OCI-LY7 (cell line): ENCODE measurements at regions of chr14 and their contacts with region 1.

Region 1: DNA sequence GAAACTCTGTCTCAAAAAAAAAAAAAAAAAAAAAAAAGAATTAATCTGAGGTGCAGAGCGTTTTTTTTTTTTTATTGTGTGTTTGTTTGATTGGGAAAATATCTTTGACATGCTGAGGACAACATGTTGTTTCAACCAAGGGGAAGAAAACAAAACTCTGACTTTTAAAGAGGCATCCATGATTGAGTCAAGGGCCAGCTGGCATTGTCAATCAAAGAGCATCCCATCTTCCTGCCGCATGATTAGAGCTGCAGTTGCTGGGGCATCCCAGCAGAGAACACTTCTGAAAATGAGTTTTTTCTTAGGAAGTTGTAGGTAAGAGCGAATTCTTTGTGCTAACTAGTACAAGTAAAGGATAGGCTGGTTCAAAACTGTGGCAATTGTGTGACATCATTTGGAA is 200.9 kb upstream of the DAAM1 start:
- DNase-seq: no peak
- H3K4me3 ChIP-seq: no peak overlapping the region
- H3K27ac ChIP-seq: no peak overlapping the region
- H3K4me1 ChIP-seq: no peaks in the 10 kb centered on the region
- CTCF ChIP-seq: no peak

Region 2: DNA sequence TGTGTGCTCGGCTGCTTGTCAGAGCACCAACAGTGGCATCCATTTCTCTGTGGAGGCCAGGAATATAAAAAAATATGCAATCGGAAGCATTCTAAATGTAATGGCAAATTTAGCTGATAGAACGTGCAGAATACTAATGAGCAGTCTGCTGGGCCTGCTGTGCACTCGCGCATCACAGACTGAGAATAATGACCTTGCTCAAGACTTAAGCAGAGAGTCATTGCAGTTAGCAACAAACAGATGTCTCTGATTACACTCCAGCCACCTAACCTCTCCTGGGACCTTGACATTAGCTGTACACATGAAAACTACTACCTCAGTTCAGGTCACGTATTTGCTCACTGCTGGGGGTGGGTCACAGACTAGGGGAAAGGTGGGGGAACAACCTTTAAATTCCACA is 68.4 kb before region 1 on chr14:
- CTCF ChIA-PET with region 1: no interaction called
- POLR2A ChIA-PET with region 1: no interaction called
- intact Hi-C with region 1: no loop called
- DNase-seq: no peak
- H3K4me3 ChIP-seq: no peak overlapping the region
- H3K27ac ChIP-seq: no peak overlapping the region
- H3K4me1 ChIP-seq: no peaks in the 10 kb centered on the region
- CTCF ChIP-seq: no peak

Region 3: DNA sequence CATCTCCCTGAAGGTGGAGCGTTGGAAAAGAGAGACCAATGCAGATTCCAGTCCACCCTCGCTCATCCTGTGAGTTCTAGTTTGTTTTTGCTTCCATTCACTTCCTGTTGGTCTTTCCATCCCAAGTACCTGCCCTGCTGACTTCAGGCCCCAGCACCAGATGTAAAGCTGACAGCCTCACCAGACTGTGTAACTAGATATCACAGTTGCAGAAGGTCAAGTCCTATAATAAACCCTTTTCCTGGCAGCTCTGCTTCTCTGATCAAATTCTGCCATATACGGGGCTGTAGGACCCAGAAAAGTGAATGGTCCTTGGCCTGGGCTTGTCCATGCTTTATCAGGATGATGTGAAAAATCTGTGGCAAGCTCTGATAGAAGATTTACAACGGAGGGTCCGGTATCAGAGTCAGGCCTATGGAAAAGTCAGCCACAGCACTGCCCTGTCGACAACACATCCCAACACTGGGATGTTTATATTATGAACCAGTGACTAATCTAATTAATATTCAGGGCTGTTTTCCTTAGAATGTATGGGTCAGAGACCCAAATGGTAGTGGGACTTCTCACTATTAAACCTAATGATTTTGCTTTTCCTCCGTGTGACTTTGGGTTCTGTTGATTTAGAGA is 546.9 kb after region 1 on chr14:
- CTCF ChIA-PET with region 1: no interaction called
- POLR2A ChIA-PET with region 1: no interaction called
- intact Hi-C with region 1: no loop called
- DNase-seq: no peak
- H3K4me3 ChIP-seq: no peak overlapping the region
- H3K27ac ChIP-seq: no peak overlapping the region
- H3K4me1 ChIP-seq: no peaks in the 10 kb centered on the region
- CTCF ChIP-seq: no peak

Region 4: GRCh38 chr14:60396718-60397343 is 1409.2 kb after region 1 on chr14:
- CTCF ChIA-PET with region 1: no interaction called
- POLR2A ChIA-PET with region 1: no interaction called
- intact Hi-C with region 1: loop called (anchors 5 kb)
- DNase-seq: no peak
- H3K4me3 ChIP-seq: no peak overlapping the region
- H3K27ac ChIP-seq: no peak overlapping the region
- H3K4me1 ChIP-seq: no peaks in the 10 kb centered on the region
- CTCF ChIP-seq: no peak